Sigmoid colon (tissue), 7 donors: ENCODE measurements at regions of chr10 and their contacts with region 1.

Region 1: GRCh38 chr10:86813101-86813500 is 56.7 kb downstream of the BMPR1A start:
- DNase-seq: no peak
- H3K4me3 ChIP-seq: no peak overlapping the region
- H3K27ac ChIP-seq: peak overlapping the region; percentile 55 to 81 (median 70)
- H3K4me1 ChIP-seq: peaks cover 0 to 81% (median 59%) of the 10 kb centered on the region in 4 donors
- H3K27me3 ChIP-seq: no peaks in the 10 kb centered on the region
- CTCF ChIP-seq: no peak
- EP300 ChIP-seq: peak in 2 of 4 donors; percentile 21 to 38
- POLR2A ChIP-seq: no peak

Region 2: GRCh38 chr10:86775056-86775869 is 37.8 kb before region 1 on chr10:
- intact Hi-C with region 1: loop called (anchors 5 kb)
- DNase-seq: no peak
- H3K4me3 ChIP-seq: no peak overlapping the region
- H3K27ac ChIP-seq: peak overlapping the region; percentile 9 to 67 (median 53)
- H3K4me1 ChIP-seq: peaks cover 0 to 91% (median 73%) of the 10 kb centered on the region in 4 donors
- H3K27me3 ChIP-seq: no peaks in the 10 kb centered on the region
- CTCF ChIP-seq: no peak
- EP300 ChIP-seq: no peak
- POLR2A ChIP-seq: no peak

Region 3: GRCh38 chr10:86786368-86786767 is 26.7 kb before region 1 on chr10:
- intact Hi-C with region 1: no loop called
- DNase-seq: no peak
- H3K4me3 ChIP-seq: no peak overlapping the region
- H3K27ac ChIP-seq: peak overlapping the region; percentile 46 to 65 (median 64)
- H3K4me1 ChIP-seq: peaks cover 0 to 73% (median 49%) of the 10 kb centered on the region in 4 donors
- H3K27me3 ChIP-seq: no peaks in the 10 kb centered on the region
- CTCF ChIP-seq: no peak
- EP300 ChIP-seq: no peak
- POLR2A ChIP-seq: no peak